PC-9 (cell line): ENCODE measurements at regions of chr5 and their contacts with region 1.

Region 1: DNA sequence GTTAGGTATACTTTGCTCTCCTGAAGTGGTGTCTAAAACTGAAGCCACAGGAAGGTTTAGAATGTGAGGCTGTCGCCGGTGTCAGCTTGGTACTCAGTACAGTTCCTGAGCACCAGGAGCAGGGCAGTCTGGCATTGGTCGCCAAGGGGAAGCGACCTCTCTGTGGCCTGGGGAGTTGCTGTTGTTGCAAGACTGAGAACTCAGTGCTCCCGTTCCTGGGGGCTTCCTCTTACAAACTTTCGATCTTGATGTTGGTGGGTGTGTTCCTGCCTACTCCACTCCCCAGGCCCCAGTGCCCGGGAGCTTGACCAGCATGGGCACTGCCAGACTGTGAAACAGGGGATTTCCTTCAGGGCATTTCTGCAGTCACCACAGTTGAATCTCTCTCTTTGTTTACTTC is 52.4 kb upstream of the PPARGC1B start:
- DNase-seq: no peak
- H3K4me3 ChIP-seq: no peak overlapping the region
- H3K27ac ChIP-seq: no peak overlapping the region
- H3K4me1 ChIP-seq: peaks cover 6% of the 10 kb centered on the region; the same call in 1 of the 2 replicates
- H3K27me3 ChIP-seq: peaks cover 12% of the 10 kb centered on the region
- CTCF ChIP-seq: no peak

Region 2: DNA sequence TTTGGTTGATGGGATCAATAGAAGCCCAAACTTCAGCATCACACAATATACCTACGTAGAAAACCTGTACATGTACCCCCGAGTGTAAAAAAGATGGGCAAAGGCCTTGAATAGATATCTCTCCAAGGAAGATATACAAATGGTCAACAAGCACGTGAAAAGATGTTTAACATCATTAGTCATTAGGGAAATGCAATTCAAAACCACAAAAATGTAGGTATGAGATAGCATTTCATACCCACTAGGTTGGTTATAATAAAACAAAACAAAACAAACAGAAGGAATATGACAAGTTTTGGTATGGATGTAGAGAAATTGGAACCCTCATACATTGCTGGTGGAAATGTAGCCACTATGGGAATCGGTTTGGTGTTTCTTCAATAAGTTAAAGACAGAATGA is 19.3 kb after region 1 on chr5:
- CTCF ChIA-PET with region 1: no interaction called
- POLR2A ChIA-PET with region 1: no interaction called
- intact Hi-C with region 1: loop called (anchors 1 kb)
- DNase-seq: peak in 1 of 2 experiments; percentile 75
- H3K4me3 ChIP-seq: no peak overlapping the region
- H3K27ac ChIP-seq: no peak overlapping the region
- H3K4me1 ChIP-seq: peaks cover 11% of the 10 kb centered on the region
- H3K27me3 ChIP-seq: peaks cover 26% of the 10 kb centered on the region
- CTCF ChIP-seq: no peak